Activated CD4-positive, alpha-beta T cell treated with anti-CD3 and anti-CD28 coated beads for 36 hours (primary cell): ENCODE measurements at regions of chr15 and their contacts with region 1.

Region 1: GRCh38 chr15:85443593-85444087 is 63.2 kb downstream of the AKAP13 start:
- DNase-seq: peak; percentile 49
- ATAC-seq: peak; percentile 81
- H3K4me3 Mint-ChIP-seq: peak overlapping the region; percentile 10
- H3K27ac Mint-ChIP-seq: peak overlapping the region; percentile 41
- H3K4me1 Mint-ChIP-seq: peaks cover 48% of the 10 kb centered on the region
- H3K27me3 Mint-ChIP-seq: no peaks in the 10 kb centered on the region

Region 2: DNA sequence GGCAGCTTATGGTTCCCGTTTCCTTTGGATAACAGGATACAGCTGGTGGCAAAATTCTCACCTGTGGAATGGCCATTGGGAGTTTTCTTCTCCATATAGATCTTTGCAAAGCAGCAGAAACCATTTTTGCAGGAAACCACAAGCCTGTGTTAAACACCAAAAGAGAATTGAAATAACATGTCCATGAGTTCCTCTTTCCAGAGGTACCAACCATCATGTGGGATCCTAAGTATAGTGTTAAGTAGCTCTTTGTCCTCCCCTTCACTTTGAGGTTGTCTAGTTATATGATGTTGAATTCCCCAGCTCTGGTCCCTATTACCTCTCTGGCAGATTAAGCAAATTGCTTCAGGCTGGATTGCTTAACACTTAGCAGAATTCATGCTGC is 31.7 kb after region 1 on chr15:
- CTCF ChIA-PET with region 1: no interaction called
- POLR2A ChIA-PET with region 1: no interaction called
- intact Hi-C with region 1: loop called in 1 of 2 experiments (anchors 5 kb)
- DNase-seq: no peak
- ATAC-seq: no peak
- H3K4me3 Mint-ChIP-seq: no peak overlapping the region
- H3K27ac Mint-ChIP-seq: no peak overlapping the region
- H3K4me1 Mint-ChIP-seq: peaks cover 75% of the 10 kb centered on the region
- H3K27me3 Mint-ChIP-seq: no peaks in the 10 kb centered on the region